Activated CD4-positive, alpha-beta memory T cell treated with anti-CD3 and anti-CD28 coated beads, Interleukin-2, amount 10 ng/mL, durations not matched to agents 7 days and 5 days (primary cell): ENCODE measurements at regions of chr10 and their contacts with region 1.

Region 1: DNA sequence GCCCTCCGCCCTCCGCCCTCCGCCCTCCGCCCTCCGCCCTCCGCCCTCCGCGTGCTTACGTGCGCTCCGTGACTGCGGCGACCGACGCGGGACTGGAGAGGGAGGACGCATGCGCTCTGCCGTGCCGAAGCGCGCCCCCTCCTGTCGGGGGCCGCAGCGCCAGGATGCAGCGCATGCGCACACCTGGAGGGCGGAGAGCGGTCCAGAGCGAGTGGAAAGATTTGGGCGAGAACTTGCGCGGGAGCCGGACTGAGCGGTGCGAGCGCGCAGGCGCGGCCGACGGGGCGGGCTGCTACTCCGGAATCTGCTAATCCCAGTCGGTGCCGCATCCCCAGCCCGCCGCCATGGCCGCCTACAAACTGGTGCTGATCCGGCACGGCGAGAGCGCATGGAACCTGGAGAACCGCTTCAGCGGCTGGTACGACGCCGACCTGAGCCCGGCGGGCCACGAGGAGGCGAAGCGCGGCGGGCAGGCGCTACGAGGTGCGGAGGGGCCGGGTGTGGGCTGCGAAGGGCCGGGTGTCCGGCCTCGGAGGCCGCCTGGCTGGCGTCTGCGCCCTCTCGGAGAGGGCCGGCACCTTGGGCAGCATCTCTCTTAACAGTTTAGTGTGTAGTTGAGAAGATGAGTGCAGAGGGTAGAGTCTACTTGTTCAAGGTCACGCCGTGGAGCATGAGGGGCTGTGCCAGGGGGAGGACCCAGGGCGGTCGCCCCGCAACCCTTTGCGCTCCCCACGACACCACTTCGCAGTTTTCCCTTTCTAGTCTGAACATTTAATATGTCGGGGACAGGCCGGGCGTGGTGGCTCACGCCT is at the start of gene PGAM1:
- DNase-seq: peak; percentile 97
- H3K4me3 Mint-ChIP-seq: peak within 1 kb of the TSS; percentile 90
- H3K27ac Mint-ChIP-seq: peak within 1 kb of the TSS; percentile 92
- H3K4me1 Mint-ChIP-seq: peaks cover 50% of the 10 kb centered on the region
- H3K27me3 Mint-ChIP-seq: no peaks in the 10 kb centered on the region
- total RNA-seq, gene PGAM1: 509 to 514 TPM

Region 2: DNA sequence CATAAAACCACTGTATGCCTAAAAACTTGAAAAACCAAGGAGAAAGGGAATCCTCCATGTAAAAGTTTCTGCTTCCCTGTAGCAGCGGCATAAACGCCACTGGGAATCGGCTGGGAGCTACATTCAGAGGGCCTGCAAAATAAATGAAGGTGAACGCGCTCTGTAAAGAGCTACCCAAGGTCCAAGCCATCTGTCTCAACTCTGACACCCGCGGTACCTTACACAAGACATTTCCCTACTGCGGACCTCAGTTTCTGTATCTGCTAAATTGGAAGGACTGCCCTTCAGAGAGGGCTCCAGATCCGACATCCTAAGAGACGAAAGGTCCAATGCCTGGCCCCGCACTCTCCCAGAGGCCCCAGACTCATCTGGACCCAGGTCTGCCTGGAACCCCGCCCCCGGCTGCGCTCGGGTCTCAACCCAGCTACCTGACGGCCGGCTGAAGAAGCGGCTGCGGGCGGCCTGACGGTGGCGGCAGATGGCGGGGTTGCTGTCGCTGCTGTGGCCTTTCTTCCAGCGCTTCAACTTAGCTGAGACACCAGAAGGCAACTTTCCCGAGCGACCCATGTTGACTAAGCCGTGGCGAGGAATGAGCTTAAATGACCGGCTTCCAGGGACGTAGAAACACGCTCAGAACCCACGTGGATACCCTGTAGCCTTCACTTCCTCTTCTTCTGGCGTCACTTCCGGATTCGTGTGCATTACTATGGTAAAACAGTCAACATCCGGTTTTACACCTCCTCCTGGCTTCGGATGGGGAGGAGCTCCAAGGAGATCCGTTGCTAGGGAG is 25.3 kb before region 1 on chr10 and contains the start of gene RRP12:
- CTCF ChIA-PET with region 1: interaction called, 5 read pairs
- POLR2A ChIA-PET with region 1: interaction called, 30 read pairs
- DNase-seq: peak; percentile 88
- H3K4me3 Mint-ChIP-seq: peak within 1 kb of the TSS; percentile 93
- H3K27ac Mint-ChIP-seq: peak within 1 kb of the TSS; percentile 92
- H3K4me1 Mint-ChIP-seq: peaks cover 20% of the 10 kb centered on the region
- H3K27me3 Mint-ChIP-seq: no peaks in the 10 kb centered on the region
- total RNA-seq, gene RRP12: 16.2 to 18.1 TPM

Region 3: GRCh38 chr10:97407211-97407951 is 18.8 kb before region 1 on chr10:
- CTCF ChIA-PET with region 1: interaction called, 41 read pairs
- POLR2A ChIA-PET with region 1: interaction called, 41 read pairs
- DNase-seq: peak; percentile 71
- H3K4me3 Mint-ChIP-seq: peak overlapping the region; percentile 25
- H3K27ac Mint-ChIP-seq: peak overlapping the region; percentile 62
- H3K4me1 Mint-ChIP-seq: peaks cover 24% of the 10 kb centered on the region
- H3K27me3 Mint-ChIP-seq: no peaks in the 10 kb centered on the region

Region 4: DNA sequence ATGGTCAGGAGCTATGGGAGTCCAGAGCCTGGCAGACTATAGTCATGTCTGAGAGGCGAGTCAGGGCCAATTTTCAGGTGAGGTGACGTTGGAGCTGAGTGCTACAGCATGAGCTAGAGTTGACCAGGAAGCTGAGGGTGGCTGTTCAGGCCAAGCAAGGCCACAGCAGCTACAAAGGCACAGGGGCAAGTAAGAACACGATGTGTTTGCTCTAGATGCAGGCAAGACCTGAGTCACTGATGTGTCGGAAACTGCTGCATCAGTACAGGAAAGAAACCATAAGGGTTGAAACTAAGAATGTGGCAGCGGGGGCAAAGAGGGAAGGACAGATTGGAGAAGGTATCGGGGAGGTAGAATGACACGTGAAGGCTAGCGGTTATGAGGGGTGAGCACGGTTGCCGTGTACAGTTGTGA is 13.3 kb before region 1 on chr10:
- CTCF ChIA-PET with region 1: interaction called, 41 read pairs
- POLR2A ChIA-PET with region 1: interaction called, 41 read pairs
- DNase-seq: peak; percentile 66
- H3K4me3 Mint-ChIP-seq: peak overlapping the region; percentile 39
- H3K27ac Mint-ChIP-seq: peak overlapping the region; percentile 83
- H3K4me1 Mint-ChIP-seq: peaks cover 63% of the 10 kb centered on the region
- H3K27me3 Mint-ChIP-seq: no peaks in the 10 kb centered on the region

Region 5: DNA sequence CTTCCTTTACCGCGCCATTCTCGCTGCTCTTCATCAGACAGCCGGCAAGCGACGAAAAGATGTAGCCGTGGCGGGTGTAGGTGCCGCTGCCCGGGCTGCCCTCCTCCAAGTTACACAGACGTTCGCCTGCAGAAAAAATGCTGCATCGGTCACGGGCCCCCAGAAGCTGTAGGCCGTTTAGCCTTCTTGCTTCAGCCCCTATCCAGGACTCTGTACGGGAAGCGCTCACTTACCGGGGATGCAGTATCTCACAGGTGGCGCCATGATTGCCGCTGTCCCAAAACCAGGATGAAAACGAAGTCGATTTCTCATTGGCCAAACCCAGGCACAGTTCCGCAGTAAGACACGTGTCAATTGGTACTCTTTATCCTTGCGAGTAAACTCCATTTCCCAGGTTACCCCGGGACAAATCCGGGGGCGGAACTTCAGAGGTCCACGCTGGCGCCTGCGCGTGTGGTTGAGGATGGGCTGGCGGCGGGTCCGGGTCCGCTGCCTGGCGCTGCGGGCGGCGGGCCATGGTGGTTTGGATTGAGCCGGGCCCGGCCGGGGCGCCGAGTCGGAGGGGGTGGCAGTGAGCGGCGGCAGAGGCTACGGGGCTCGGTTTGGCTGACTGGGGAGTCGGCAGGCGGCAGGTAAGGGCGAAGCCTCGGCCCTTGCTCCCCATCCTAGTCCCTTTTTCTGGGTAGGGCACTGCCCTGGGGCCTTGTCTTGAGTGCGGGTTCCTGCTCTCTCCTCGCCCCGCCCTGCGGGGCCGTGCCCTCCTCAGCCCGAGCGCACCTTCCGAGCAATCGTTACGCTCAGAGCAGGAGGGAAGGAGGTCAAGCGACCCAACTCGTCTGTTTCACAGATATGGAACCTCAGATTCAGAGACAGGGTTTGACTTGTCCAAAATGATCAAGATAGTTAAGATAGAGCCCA is 19.8 kb after region 1 on chr10 and contains the starts of genes EXOSC1 and ZDHHC16:
- CTCF ChIA-PET with region 1: interaction called, 9 read pairs
- POLR2A ChIA-PET with region 1: interaction called, 18 read pairs
- DNase-seq: peak; percentile 93
- H3K4me3 Mint-ChIP-seq: peak within 1 kb of the TSS; percentile 89
- H3K27ac Mint-ChIP-seq: peak within 1 kb of the TSS; percentile 85
- H3K4me1 Mint-ChIP-seq: peaks cover 55% of the 10 kb centered on the region
- H3K27me3 Mint-ChIP-seq: no peaks in the 10 kb centered on the region
- total RNA-seq, gene EXOSC1: 49.3 to 49.8 TPM
- total RNA-seq, gene ZDHHC16: 33.9 to 35.7 TPM